GM12878 (cell line): ENCODE measurements at regions of chr15 and their contacts with region 1.

Region 1: GRCh38 chr15:101652098-101652782 is at the start of gene TM2D3:
- DNase-seq: peak; percentile 65
- ATAC-seq: peak; percentile 94
- H3K4me3 ChIP-seq: peak within 1 kb of the TSS; percentile 85
- H3K27ac ChIP-seq: peak within 1 kb of the TSS; percentile 87
- H3K4me1 ChIP-seq: peaks cover 20% of the 10 kb centered on the region
- H3K27me3 ChIP-seq: no peaks in the 10 kb centered on the region
- CTCF ChIP-seq: peak; percentile 58 to 69 (median 63); a peak in 5 of 6 replicates
- EP300 ChIP-seq: peak in 1 of 2 experiments; percentile 27; a peak in 2 of 4 replicates
- POLR2A ChIP-seq: peak; percentile 98
- RAD21 ChIP-seq: peak; percentile 12; the same call in 1 of the 2 replicates
- polyA plus RNA-seq, gene TM2D3: 48.7 to 71.8 TPM

Region 2: GRCh38 chr15:101288908-101289513 is 363.2 kb before region 1 on chr15:
- CTCF ChIA-PET with region 1: interaction called, 28 read pairs
- POLR2A ChIA-PET with region 1: interaction called, 3 read pairs
- RAD21 ChIA-PET with region 1: interaction called, 5 read pairs
- SMC1A ChIA-PET with region 1: interaction called, 5 read pairs
- in situ Hi-C with region 1: no loop called
- intact Hi-C with region 1: no loop called
- DNase-seq: no peak
- ATAC-seq: peak; percentile 48
- H3K4me3 ChIP-seq: no peak overlapping the region
- H3K27ac ChIP-seq: no peak overlapping the region
- H3K4me1 ChIP-seq: peaks cover 4% of the 10 kb centered on the region
- H3K27me3 ChIP-seq: no peaks in the 10 kb centered on the region
- CTCF ChIP-seq: peak; percentile 52 to 58 (median 53)
- EP300 ChIP-seq: no peak
- POLR2A ChIP-seq: no peak
- RAD21 ChIP-seq: peak; percentile 45

Region 3: GRCh38 chr15:101510212-101511197 is 141.7 kb before region 1 on chr15:
- CTCF ChIA-PET with region 1: no interaction called
- POLR2A ChIA-PET with region 1: no interaction called
- RAD21 ChIA-PET with region 1: no interaction called
- SMC1A ChIA-PET with region 1: no interaction called
- in situ Hi-C with region 1: no loop called
- intact Hi-C with region 1: no loop called
- DNase-seq: no peak
- ATAC-seq: no peak
- H3K4me3 ChIP-seq: no peak overlapping the region
- H3K27ac ChIP-seq: no peak overlapping the region
- H3K4me1 ChIP-seq: no peaks in the 10 kb centered on the region
- H3K27me3 ChIP-seq: no peaks in the 10 kb centered on the region
- CTCF ChIP-seq: no peak
- EP300 ChIP-seq: no peak
- POLR2A ChIP-seq: no peak
- RAD21 ChIP-seq: no peak

Region 4: DNA sequence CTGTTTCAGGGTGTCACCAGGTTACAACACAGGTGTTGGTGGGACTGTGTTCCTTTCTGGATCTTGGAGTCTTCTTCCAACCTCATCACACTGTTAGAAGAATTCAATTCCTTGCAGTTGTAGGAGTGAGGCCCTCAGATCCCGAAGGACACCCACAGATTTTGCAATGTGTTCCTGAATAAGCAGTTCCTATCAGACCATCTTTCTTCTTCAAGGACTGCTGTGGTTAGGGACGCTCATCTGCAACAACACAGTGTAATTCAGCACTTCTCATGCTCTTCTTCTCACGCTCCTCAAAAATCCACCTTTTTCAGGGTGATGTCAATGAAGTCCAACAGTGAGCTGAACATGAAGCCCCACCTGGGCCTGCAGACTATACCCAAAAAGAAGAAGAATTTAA is 18.9 kb before region 1 on chr15:
- CTCF ChIA-PET with region 1: no interaction called
- POLR2A ChIA-PET with region 1: no interaction called
- RAD21 ChIA-PET with region 1: no interaction called
- SMC1A ChIA-PET with region 1: no interaction called
- in situ Hi-C with region 1: no loop called
- intact Hi-C with region 1: no loop called
- DNase-seq: no peak
- ATAC-seq: no peak
- H3K4me3 ChIP-seq: no peak overlapping the region
- H3K27ac ChIP-seq: no peak overlapping the region
- H3K4me1 ChIP-seq: no peaks in the 10 kb centered on the region
- H3K27me3 ChIP-seq: no peaks in the 10 kb centered on the region
- CTCF ChIP-seq: no peak
- EP300 ChIP-seq: no peak
- POLR2A ChIP-seq: no peak
- RAD21 ChIP-seq: no peak

Region 5: DNA sequence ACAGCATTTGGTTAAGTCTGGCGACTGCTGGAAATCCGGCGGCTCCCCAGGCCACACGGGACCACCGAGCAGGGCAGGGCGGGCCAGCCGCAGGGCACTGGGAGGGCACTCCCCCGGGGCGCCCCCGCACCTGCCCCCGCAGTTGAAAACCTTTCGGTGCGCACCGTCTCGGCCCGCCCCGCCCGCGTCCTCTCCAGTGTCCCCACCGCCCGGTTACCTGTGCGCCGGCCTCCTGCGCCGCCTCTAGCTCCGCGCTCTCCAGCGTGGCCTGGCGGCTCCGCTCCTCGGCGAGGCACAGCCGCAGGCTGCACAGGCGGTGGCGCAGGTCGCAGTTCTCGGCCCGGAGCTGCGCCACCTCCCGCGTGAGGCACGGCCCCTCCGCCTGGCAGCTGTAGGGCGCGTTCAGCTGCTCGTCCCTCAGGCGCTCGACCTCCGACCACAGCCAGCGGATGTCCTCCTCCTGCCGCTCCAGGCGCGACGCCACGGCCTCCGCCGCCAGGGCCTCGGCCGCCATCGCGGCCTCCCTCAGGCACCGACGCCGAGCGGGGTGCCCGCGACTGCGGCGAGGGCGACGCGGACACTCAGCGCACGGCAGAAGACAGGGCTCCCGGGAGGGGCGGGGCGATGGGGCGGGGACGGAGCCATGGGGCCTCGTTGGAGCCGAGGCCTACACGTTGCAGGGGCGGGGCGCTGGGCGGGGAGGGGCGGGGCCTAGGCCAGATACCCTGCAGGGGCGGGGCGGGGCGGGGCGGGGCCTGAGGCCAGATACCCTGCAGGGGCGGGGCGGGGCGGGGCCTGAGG is 71.8 kb after region 1 on chr15 and contains the start of gene TARS3:
- CTCF ChIA-PET with region 1: no interaction called
- POLR2A ChIA-PET with region 1: interaction called, 4 read pairs
- RAD21 ChIA-PET with region 1: interaction called, 4 read pairs
- SMC1A ChIA-PET with region 1: interaction called, 8 read pairs
- in situ Hi-C with region 1: no loop called
- intact Hi-C with region 1: loop called (anchors 2 kb)
- DNase-seq: peak; percentile 37
- ATAC-seq: peak; percentile 95
- H3K4me3 ChIP-seq: peak within 1 kb of the TSS; percentile 87
- H3K27ac ChIP-seq: peak within 1 kb of the TSS; percentile 65
- H3K4me1 ChIP-seq: peaks cover 3% of the 10 kb centered on the region; the same call in 1 of the 2 replicates
- H3K27me3 ChIP-seq: no peaks in the 10 kb centered on the region
- CTCF ChIP-seq: peak in 2 of 3 experiments; percentile 12 to 13; a peak in 2 of 6 replicates
- EP300 ChIP-seq: no peak
- POLR2A ChIP-seq: peak; percentile 97
- RAD21 ChIP-seq: no peak
- polyA plus RNA-seq, gene TARS3: 1.4 to 2.2 TPM